Activated T-helper 1 cell treated with anti-CD3 and anti-CD28 coated beads, Interleukin-12 subunit alpha, Interleukin-12 subunit beta, Interleukin-2, Interleukin-4 antibody, amounts not matched to agents 30 ng/mL and 10 ng/mL and 1 ng/mL, durations not matched to agents 14 hours and 24 hours and 36 hours (primary cell): ENCODE measurements at regions of chr1 and their contacts with region 1.

Region 1: DNA sequence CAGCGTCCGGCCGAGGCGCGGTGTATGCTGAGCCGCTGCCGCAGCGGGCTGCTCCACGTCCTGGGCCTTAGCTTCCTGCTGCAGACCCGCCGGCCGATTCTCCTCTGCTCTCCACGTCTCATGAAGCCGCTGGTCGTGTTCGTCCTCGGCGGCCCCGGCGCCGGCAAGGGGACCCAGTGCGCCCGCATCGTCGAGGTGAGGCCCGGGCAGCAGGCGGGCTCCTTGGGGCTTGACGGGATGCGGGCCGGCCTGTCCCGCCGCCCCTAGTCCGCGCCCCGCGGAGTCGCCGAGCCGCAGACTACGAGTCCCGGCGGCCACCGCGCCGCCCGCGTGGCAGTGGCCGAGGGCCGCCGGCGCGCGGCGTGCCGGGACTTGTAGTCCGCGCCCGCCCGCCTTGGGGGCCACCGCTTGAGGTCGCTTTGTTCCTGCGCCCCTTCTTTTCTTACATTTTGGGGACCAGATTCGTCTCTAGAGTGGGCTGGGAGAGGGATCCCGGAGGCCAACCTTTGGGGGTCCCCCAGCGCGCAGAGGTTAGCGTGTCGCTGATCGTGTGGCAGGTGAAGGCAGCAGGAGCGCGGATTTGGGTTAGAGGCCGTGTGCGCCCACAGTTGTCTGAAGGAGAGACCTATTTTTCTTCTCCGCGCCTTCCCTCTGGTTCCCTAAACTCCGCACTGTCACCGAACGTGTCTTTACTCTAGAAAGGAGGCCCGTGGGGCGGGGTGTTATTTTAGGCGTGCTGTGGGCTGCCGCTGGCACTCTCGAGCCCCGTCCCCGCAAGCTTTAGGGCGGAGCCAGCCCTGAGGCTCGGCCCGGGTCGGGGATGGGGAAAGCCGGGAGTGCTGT is 553 bp downstream of the CMPK1 start:
- DNase-seq: peak; percentile 73
- H3K4me3 Mint-ChIP-seq: no peak overlapping the region
- H3K27ac Mint-ChIP-seq: peak overlapping the region; percentile 97
- H3K4me1 Mint-ChIP-seq: peaks cover 19% of the 10 kb centered on the region
- H3K27me3 Mint-ChIP-seq: no peaks in the 10 kb centered on the region

Region 2: DNA sequence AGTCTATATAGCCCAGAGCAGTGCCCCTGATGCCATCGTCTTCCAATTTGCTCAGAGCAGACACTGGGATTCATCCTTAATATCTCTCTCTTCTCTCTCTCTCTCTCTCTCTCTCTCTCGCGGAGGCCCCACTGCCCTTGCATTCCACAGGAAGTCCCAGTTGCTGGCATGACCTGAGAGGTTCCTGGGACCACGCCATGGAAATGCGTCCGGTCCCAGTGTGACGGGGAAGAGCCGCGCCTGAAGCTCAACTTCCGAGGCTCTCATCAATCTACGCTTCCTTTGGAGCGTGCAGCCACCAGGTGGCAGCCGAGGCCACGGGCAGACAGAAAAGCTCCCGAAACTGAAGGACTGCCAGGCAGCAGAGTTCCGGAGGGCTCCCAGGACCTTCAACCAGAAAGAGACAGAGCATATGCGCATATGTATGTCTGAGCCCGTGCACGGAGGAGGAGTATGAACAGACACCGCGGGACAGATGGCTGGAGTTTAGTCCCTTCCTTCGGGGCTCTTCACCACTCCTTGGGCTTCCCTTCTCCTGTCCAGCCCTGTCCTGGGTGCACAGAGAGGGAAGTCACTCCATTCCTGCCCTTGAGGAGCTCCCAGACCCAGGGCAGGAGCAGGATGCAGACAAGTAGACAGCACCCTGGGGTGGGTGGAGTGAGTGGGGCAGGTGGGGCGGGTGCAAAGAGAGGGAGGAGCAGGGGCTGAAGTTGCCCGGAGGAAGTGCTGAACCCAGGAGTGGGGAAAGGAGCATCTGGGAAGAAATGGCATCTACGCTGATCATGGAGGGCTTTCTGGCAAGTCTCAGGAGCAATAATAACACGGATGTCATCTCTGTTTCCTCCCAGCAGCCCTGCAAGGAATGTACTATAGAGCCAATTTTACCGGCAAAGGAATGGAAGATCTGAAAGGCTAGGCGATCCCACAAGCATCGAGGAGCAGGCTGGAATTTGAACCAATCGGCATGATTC is 154.8 kb before region 1 on chr1:
- intact Hi-C with region 1: loop called (anchors 1 kb)
- DNase-seq: peak; percentile 74
- H3K4me3 Mint-ChIP-seq: peak overlapping the region; percentile 87
- H3K27ac Mint-ChIP-seq: peak overlapping the region; percentile 92
- H3K4me1 Mint-ChIP-seq: peaks cover 13% of the 10 kb centered on the region
- H3K27me3 Mint-ChIP-seq: peaks cover 22% of the 10 kb centered on the region

Region 3: GRCh38 chr1:47313915-47314664 is 20.1 kb before region 1 on chr1 and contains the start of gene STIL:
- intact Hi-C with region 1: loop called (anchors 1 kb)
- DNase-seq: peak; percentile 98
- H3K4me3 Mint-ChIP-seq: peak within 1 kb of the TSS; percentile 94
- H3K27ac Mint-ChIP-seq: peak within 1 kb of the TSS; percentile 85
- H3K4me1 Mint-ChIP-seq: peaks cover 27% of the 10 kb centered on the region
- H3K27me3 Mint-ChIP-seq: peaks cover 3% of the 10 kb centered on the region
- total RNA-seq, gene STIL: 25.8 and 26.3 TPM in 2 replicates

Region 4: DNA sequence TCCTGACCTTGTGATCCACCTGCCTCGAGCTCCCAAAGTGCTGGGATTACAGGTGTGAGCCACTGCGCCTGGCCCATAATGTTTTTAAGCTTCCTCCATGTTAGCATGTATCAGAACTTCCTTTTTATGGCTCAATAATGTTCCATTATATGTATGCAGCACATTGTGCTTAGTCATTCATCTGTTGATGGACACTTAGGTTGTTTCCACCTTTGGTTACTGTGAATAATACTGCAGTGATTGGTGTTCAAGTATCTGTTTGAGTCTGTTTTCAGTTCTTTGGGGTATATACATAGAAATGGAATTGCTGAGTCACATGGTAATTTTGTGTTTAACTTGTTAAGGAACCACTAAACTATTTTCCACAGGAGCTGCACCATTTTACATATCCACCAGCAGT is 17.2 kb after region 1 on chr1:
- intact Hi-C with region 1: loop called (anchors 1 kb)
- DNase-seq: no peak
- H3K4me3 Mint-ChIP-seq: no peak overlapping the region
- H3K27ac Mint-ChIP-seq: peak overlapping the region; percentile 86
- H3K4me1 Mint-ChIP-seq: peaks cover 21% of the 10 kb centered on the region
- H3K27me3 Mint-ChIP-seq: no peaks in the 10 kb centered on the region